OCI-LY7 (cell line): ENCODE measurements at regions of chr2 and their contacts with region 1.

Region 1: GRCh38 chr2:127810619-127811396 is at the start of gene WDR33:
- DNase-seq: peak; percentile 98
- H3K4me3 ChIP-seq: peak within 1 kb of the TSS; percentile 91
- H3K27ac ChIP-seq: peak within 1 kb of the TSS; percentile 84
- H3K4me1 ChIP-seq: peaks cover 53% of the 10 kb centered on the region
- CTCF ChIP-seq: peak; percentile 44; the same call in 1 of the 2 replicates
- total RNA-seq, gene WDR33: 60.6 and 70.7 TPM in 2 replicates

Region 2: GRCh38 chr2:127279781-127280180 is 531.0 kb before region 1 on chr2:
- CTCF ChIA-PET with region 1: no interaction called
- POLR2A ChIA-PET with region 1: no interaction called
- intact Hi-C with region 1: no loop called
- DNase-seq: no peak
- H3K4me3 ChIP-seq: no peak overlapping the region
- H3K27ac ChIP-seq: no peak overlapping the region
- H3K4me1 ChIP-seq: no peaks in the 10 kb centered on the region
- CTCF ChIP-seq: no peak

Region 3: DNA sequence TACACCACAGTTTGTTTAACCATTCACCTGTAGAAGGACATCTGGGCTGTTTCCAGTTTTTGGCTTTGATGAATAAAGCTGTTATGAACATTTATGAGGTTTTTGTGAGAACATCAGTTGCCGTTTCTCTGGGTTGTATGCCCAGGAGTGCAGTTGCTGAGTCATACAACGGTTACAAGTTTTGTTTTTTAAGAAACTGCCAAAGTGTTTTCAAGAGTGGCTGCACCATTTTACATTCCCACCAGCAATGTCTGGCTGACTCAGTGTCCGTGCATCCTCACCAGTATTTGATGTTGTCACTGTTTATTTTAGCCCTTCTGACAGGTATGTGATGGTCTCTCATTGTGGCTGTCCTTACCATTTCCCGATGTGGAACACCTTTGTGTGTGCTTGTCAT is 212.8 kb before region 1 on chr2:
- CTCF ChIA-PET with region 1: no interaction called
- POLR2A ChIA-PET with region 1: no interaction called
- intact Hi-C with region 1: no loop called
- DNase-seq: no peak
- H3K4me3 ChIP-seq: no peak overlapping the region
- H3K27ac ChIP-seq: no peak overlapping the region
- H3K4me1 ChIP-seq: no peaks in the 10 kb centered on the region
- CTCF ChIP-seq: no peak

Region 4: DNA sequence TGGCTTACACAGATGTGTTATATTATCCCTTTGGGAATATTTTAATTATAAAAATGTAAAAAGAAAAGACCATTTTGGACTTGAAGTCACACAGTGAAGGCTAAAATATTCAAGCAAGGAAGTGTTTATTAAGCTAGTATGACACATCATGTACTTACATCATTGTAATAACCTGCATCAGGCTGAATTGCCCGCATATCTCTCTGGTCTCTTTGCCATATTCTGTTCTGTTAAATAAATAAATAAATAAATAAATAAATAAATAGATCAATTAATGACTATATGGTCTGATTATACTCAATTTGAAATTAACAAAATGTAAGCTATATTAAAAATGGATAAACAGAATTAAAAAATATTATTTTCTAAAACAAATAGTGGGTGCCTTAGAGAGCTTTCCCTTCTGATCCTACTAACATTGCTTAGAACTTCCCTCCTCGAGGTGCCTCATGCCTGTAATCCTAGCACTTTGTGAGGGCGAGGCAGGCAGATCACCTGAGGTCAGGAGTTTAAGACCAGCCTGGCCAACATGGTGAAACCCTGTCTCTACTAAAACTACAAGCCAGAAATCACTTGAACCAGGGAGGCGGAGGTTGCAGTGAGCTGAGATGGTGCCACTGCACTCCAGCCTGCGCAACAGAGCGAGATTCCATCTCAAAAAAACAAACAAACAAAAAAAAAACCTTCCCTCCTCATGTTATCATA is 41.9 kb before region 1 on chr2:
- CTCF ChIA-PET with region 1: no interaction called
- POLR2A ChIA-PET with region 1: no interaction called
- intact Hi-C with region 1: loop called (anchors 2 kb)
- DNase-seq: no peak
- H3K4me3 ChIP-seq: no peak overlapping the region
- H3K27ac ChIP-seq: no peak overlapping the region
- H3K4me1 ChIP-seq: peaks cover 12% of the 10 kb centered on the region
- CTCF ChIP-seq: no peak

Region 5: DNA sequence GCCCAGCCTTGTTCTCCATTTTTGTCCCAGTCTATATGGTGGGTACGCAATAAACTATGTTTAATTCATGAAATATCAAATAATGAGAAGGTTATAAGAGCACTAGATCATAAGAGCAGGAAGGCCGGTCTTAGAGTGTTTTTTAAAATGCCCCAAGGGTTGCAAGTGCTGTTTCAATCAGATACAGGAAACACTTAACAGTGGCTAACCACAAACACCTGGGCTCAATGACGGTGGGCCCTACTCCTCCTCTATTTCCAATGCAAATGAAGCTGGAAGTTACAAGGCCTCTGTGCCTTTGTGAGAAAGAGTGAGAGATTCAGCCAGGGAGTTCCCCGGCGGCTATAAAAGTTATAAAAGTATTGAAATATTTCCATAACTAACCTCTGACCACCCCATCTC is 19.0 kb after region 1 on chr2:
- CTCF ChIA-PET with region 1: no interaction called
- POLR2A ChIA-PET with region 1: interaction called, 22 read pairs
- intact Hi-C with region 1: loop called (anchors 2 kb)
- DNase-seq: peak; percentile 98
- H3K4me3 ChIP-seq: peak overlapping the region; percentile 61
- H3K27ac ChIP-seq: peak overlapping the region; percentile 99
- H3K4me1 ChIP-seq: peaks cover 47% of the 10 kb centered on the region
- CTCF ChIP-seq: no peak

Region 6: GRCh38 chr2:127857265-127857808 is 46.5 kb after region 1 on chr2:
- CTCF ChIA-PET with region 1: no interaction called
- POLR2A ChIA-PET with region 1: interaction called, 5 read pairs
- intact Hi-C with region 1: loop called (anchors 2 kb)
- DNase-seq: peak; percentile 67
- H3K4me3 ChIP-seq: peak overlapping the region; percentile 96
- H3K27ac ChIP-seq: peak overlapping the region; percentile 77
- H3K4me1 ChIP-seq: peaks cover 58% of the 10 kb centered on the region
- CTCF ChIP-seq: no peak